Calu3 (cell line): ENCODE measurements at regions of chr6 and their contacts with region 1.

Region 1: DNA sequence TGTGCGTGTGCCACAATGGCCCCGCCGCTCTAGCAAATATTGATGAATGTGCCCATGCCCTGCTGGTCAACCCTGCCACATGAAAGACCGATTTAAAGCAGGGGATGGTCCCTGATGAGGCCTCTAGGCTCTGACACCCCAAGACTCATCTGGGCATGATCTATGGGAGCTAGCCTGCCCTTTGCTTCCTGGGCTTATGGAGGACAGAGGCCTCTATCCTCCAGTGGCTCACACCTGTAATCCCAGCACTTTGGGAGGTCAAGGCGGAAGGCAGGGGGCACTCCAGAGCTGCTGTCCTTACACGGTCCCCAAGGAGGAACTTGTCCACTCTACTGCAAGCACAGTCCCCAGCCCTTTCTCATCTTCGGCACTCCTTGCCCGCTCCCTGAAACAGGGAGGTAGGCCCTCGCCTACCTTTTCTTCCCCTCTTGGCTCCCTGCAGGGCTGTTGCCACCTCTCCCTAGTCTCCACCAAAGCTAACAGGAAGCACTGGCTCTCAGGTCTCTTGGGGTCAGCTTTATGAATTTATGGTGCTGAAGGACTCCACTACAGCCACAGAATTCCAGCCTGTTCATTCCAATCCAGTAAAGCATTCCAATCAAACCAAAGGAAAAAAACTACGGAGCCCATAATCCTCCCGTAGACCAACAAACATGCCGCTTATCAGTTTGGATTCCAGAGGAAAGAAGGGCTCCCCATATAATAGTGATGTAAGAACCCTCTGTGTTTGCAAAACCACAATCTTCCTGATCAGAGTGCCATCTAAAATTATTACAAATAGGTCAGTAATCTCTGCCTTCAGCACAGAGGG is 48.7 kb upstream of the FOXQ1 start:
- DNase-seq: no peak
- H3K4me3 Mint-ChIP-seq: no peak overlapping the region
- H3K27ac Mint-ChIP-seq: no peak overlapping the region
- H3K4me1 Mint-ChIP-seq: peaks cover 16% of the 10 kb centered on the region
- H3K27me3 Mint-ChIP-seq: no peaks in the 10 kb centered on the region
- CTCF ChIP-seq: no peak

Region 2: GRCh38 chr6:1311400-1312202 is 48.4 kb after region 1 on chr6 and contains the start of gene FOXQ1:
- CTCF ChIA-PET with region 1: interaction called, 3 read pairs
- intact Hi-C with region 1: loop called (anchors 10 kb)
- DNase-seq: peak; percentile 94
- H3K4me3 Mint-ChIP-seq: peak within 1 kb of the TSS; percentile 76
- H3K27ac Mint-ChIP-seq: peak within 1 kb of the TSS; percentile 82
- H3K4me1 Mint-ChIP-seq: peaks cover 31% of the 10 kb centered on the region
- H3K27me3 Mint-ChIP-seq: no peaks in the 10 kb centered on the region
- CTCF ChIP-seq: no peak
- total RNA-seq, gene FOXQ1: 46.1 and 51.0 TPM in 2 replicates

Region 3: GRCh38 chr6:1325461-1326309 is 62.4 kb after region 1 on chr6:
- CTCF ChIA-PET with region 1: no interaction called
- intact Hi-C with region 1: no loop called
- DNase-seq: peak; percentile 80
- H3K4me3 Mint-ChIP-seq: peak overlapping the region; percentile 39
- H3K27ac Mint-ChIP-seq: peak overlapping the region; percentile 94
- H3K4me1 Mint-ChIP-seq: peaks cover 56% of the 10 kb centered on the region
- H3K27me3 Mint-ChIP-seq: no peaks in the 10 kb centered on the region
- CTCF ChIP-seq: no peak